Caco-2 (cell line): ENCODE measurements at regions of chr6 and their contacts with region 1.

Region 1: DNA sequence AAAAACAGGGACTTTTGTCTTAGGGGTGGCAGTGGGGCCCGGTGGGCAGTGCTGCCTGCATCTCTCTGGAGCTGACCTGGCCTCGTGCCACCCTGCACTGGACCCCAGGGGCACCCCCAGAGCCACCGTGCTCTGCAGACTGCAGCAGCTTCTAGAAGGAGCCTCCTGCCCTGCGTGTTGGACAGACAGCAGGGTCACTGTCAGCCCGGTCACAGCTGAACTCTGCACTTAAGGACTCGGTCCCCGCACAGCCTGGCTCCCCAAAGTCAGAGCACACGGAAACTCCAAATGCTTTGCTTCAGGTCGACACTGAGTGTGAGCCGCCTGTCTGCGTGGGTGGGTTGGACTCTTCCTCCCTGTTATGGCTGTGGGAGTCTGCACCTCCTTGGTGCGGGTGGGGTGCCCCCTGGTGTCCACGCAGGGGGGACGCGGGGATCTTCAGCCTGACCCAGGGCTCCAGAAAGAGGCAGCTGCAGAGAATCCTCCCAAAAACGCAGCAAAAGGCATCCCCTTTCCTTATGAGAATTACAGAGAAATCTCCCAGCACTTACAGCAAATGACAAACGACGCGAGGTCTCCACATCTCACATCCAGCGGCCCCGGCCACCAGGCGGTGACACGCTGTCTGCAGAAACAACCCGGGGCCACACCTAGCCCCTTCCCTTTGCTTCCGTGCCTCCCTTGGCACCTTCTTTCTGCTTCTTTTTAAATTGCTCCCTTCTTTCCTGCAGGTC is 36.3 kb upstream of the DACT2 start:
- DNase-seq: peak; percentile 69 to 83
- H3K4me3 ChIP-seq: peak overlapping the region; percentile 15; the same call in 1 of the 2 replicates
- H3K4me3 Mint-ChIP-seq: no peak overlapping the region
- H3K27ac Mint-ChIP-seq: peak overlapping the region; percentile 19
- H3K4me1 ChIP-seq: no peaks in the 10 kb centered on the region
- H3K4me1 Mint-ChIP-seq: no peaks in the 10 kb centered on the region
- H3K27me3 ChIP-seq: no peaks in the 10 kb centered on the region
- H3K27me3 Mint-ChIP-seq: no peaks in the 10 kb centered on the region
- CTCF ChIP-seq: peak; percentile 82 to 91

Region 2: GRCh38 chr6:168060521-168060931 is 295.4 kb before region 1 on chr6:
- CTCF ChIA-PET with region 1: no interaction called
- POLR2A ChIA-PET with region 1: no interaction called
- intact Hi-C with region 1: loop called (anchors 10 kb)
- DNase-seq: peak; percentile 64 to 75
- H3K4me3 ChIP-seq: no peak overlapping the region
- H3K4me3 Mint-ChIP-seq: no peak overlapping the region
- H3K27ac Mint-ChIP-seq: peak overlapping the region; percentile 17
- H3K4me1 ChIP-seq: peaks cover 21% of the 10 kb centered on the region; the same call in 1 of the 2 replicates
- H3K4me1 Mint-ChIP-seq: peaks cover 9% of the 10 kb centered on the region
- H3K27me3 ChIP-seq: no peaks in the 10 kb centered on the region
- H3K27me3 Mint-ChIP-seq: no peaks in the 10 kb centered on the region
- CTCF ChIP-seq: peak; percentile 61 to 85

Region 3: GRCh38 chr6:168150551-168151320 is 205.1 kb before region 1 on chr6:
- CTCF ChIA-PET with region 1: interaction called, 3 read pairs
- POLR2A ChIA-PET with region 1: no interaction called
- intact Hi-C with region 1: loop called (anchors 2 kb)
- DNase-seq: peak in 1 of 2 experiments; percentile 65
- H3K4me3 ChIP-seq: no peak overlapping the region
- H3K4me3 Mint-ChIP-seq: peak overlapping the region; percentile 42
- H3K27ac Mint-ChIP-seq: no peak overlapping the region
- H3K4me1 ChIP-seq: 0 out of 2 replicates have a peak, but pooled peaks cover 4% of the 10 kb centered on the region
- H3K4me1 Mint-ChIP-seq: peaks cover 9% of the 10 kb centered on the region
- H3K27me3 ChIP-seq: no peaks in the 10 kb centered on the region
- H3K27me3 Mint-ChIP-seq: no peaks in the 10 kb centered on the region
- CTCF ChIP-seq: peak; percentile 62 to 75

Region 4: DNA sequence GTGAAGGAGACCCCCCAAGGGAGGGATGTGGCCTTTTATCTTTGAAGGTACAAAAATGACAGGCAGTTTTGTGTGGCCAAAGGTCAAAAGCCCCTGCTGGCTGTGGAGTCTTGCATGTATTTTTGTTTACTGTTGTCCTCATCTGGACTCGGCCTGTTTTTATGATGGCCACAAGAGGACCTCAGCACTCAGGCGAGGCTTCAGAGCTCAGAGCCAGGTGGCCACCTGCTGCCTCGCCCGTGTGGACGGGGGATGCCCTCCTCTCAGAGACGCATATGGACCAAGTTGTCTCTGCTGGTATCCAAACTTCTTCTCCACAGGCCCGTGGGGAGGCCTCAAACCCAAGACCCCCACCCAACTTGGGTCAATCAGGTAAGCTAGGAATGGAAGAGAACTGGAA is 154.5 kb before region 1 on chr6:
- CTCF ChIA-PET with region 1: interaction called, 3 read pairs
- POLR2A ChIA-PET with region 1: no interaction called
- intact Hi-C with region 1: loop called (anchors 2 kb)
- DNase-seq: peak in 1 of 2 experiments; percentile 30
- H3K4me3 ChIP-seq: no peak overlapping the region
- H3K4me3 Mint-ChIP-seq: no peak overlapping the region
- H3K27ac Mint-ChIP-seq: no peak overlapping the region
- H3K4me1 ChIP-seq: no peaks in the 10 kb centered on the region
- H3K4me1 Mint-ChIP-seq: peaks cover 7% of the 10 kb centered on the region
- H3K27me3 ChIP-seq: no peaks in the 10 kb centered on the region
- H3K27me3 Mint-ChIP-seq: no peaks in the 10 kb centered on the region
- CTCF ChIP-seq: peak; percentile 39 to 41

Region 5: DNA sequence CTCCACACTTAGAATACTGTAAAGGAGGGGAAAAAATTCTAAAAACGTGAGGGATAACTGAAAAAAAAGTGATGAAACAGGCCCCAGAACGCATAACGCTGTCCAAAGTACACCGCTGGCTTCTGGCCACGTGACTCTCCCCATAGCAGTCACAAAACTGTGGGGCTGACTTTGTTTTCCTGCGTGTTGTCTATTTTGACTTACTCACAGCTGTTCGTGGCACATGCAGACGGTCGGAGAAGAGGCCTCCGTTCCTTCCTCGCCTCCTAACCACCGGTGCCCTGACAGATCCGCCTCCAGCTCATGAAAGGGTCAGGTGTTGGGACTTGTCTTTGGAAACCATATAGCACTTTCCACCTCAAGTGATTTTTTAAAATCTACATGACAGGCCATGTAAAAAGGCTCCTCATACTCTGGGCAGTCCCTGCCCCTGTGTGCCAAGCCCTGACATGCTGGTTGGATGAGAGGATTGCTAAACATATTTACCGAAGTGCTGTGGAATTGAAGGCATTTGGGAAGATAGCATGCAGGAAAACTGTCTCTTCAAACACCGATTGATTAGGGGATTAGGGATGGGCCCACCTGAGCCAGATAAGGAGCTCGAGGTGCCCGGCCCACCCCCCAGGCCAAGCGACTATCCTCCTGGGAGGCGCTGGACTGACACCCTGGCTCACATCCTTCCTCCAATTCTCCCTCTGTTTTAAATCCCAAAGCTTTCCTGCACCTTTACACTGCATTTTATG is 91.1 kb before region 1 on chr6:
- CTCF ChIA-PET with region 1: no interaction called
- POLR2A ChIA-PET with region 1: no interaction called
- intact Hi-C with region 1: loop called (anchors 2 kb)
- DNase-seq: peak; percentile 78 to 83
- H3K4me3 ChIP-seq: 0 out of 2 replicates have a peak overlapping the region, but pooled peaks have one; percentile 8
- H3K4me3 Mint-ChIP-seq: peak overlapping the region; percentile 53
- H3K27ac Mint-ChIP-seq: peak overlapping the region; percentile 60
- H3K4me1 ChIP-seq: peaks cover 62% of the 10 kb centered on the region
- H3K4me1 Mint-ChIP-seq: peaks cover 36% of the 10 kb centered on the region
- H3K27me3 ChIP-seq: no peaks in the 10 kb centered on the region
- H3K27me3 Mint-ChIP-seq: no peaks in the 10 kb centered on the region
- CTCF ChIP-seq: no peak

Region 6: GRCh38 chr6:168292826-168293225 is 63.1 kb before region 1 on chr6:
- CTCF ChIA-PET with region 1: no interaction called
- POLR2A ChIA-PET with region 1: no interaction called
- intact Hi-C with region 1: no loop called
- DNase-seq: no peak
- H3K4me3 ChIP-seq: no peak overlapping the region
- H3K4me3 Mint-ChIP-seq: no peak overlapping the region
- H3K27ac Mint-ChIP-seq: no peak overlapping the region
- H3K4me1 ChIP-seq: no peaks in the 10 kb centered on the region
- H3K4me1 Mint-ChIP-seq: no peaks in the 10 kb centered on the region
- H3K27me3 ChIP-seq: no peaks in the 10 kb centered on the region
- H3K27me3 Mint-ChIP-seq: no peaks in the 10 kb centered on the region
- CTCF ChIP-seq: no peak

Region 7: GRCh38 chr6:168319274-168320111 is 36.4 kb before region 1 on chr6 and contains the start of gene DACT2:
- CTCF ChIA-PET with region 1: interaction called, 4 read pairs
- POLR2A ChIA-PET with region 1: no interaction called
- intact Hi-C with region 1: loop called (anchors 2 kb)
- DNase-seq: peak; percentile 59 to 76
- H3K4me3 ChIP-seq: peak within 1 kb of the TSS; percentile 42
- H3K4me3 Mint-ChIP-seq: peak within 1 kb of the TSS; percentile 80
- H3K27ac Mint-ChIP-seq: peak within 1 kb of the TSS; percentile 48
- H3K4me1 ChIP-seq: peaks cover 40% of the 10 kb centered on the region
- H3K4me1 Mint-ChIP-seq: peaks cover 16% of the 10 kb centered on the region
- H3K27me3 ChIP-seq: no peaks in the 10 kb centered on the region
- H3K27me3 Mint-ChIP-seq: no peaks in the 10 kb centered on the region
- CTCF ChIP-seq: no peak
- total RNA-seq, gene DACT2: 18.6 and 21.1 TPM in 2 replicates

Region 8: DNA sequence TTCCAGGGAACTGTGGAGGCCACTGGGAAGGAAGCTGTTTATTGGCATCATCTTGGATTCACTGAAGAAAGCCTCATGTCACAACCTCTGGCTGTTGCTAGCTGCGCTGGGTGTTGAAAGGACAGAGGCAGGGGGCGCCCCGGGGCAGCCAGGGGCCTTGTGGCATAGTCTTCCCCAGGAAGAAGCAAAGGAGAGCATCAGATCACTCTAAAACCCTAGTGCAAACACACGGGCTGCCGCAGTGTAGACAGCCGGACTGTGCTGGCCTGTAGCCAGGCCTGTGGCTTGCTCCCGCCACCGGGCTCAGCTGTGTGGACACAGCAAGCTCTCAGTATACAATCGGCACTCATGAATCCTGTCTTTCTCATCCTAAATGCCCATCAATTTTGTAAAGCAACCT is 61.3 kb after region 1 on chr6:
- CTCF ChIA-PET with region 1: no interaction called
- POLR2A ChIA-PET with region 1: no interaction called
- intact Hi-C with region 1: no loop called
- DNase-seq: no peak
- H3K4me3 ChIP-seq: no peak overlapping the region
- H3K4me3 Mint-ChIP-seq: no peak overlapping the region
- H3K27ac Mint-ChIP-seq: no peak overlapping the region
- H3K4me1 ChIP-seq: no peaks in the 10 kb centered on the region
- H3K4me1 Mint-ChIP-seq: no peaks in the 10 kb centered on the region
- H3K27me3 ChIP-seq: no peaks in the 10 kb centered on the region
- H3K27me3 Mint-ChIP-seq: peaks cover 7% of the 10 kb centered on the region
- CTCF ChIP-seq: no peak